ENCODE measurements at regions of chr11 and their contacts with region 1.

Region 1: GRCh38 chr11:59753650-59754493 is 1.3 kb upstream of the STX3 start:
- H3K4me3 Mint-ChIP-seq: peak overlapping the region; percentile 86
- H3K27ac Mint-ChIP-seq: peak overlapping the region; percentile 86
- H3K4me1 Mint-ChIP-seq: peaks cover 44% of the 10 kb centered on the region
- H3K27me3 Mint-ChIP-seq: peaks cover 1% of the 10 kb centered on the region

Region 2: GRCh38 chr11:59802639-59803176 is 48.8 kb after region 1 on chr11:
- intact Hi-C with region 1: loop called (anchors 1 kb)
- H3K4me3 Mint-ChIP-seq: no peak overlapping the region
- H3K27ac Mint-ChIP-seq: no peak overlapping the region
- H3K4me1 Mint-ChIP-seq: peaks cover 4% of the 10 kb centered on the region
- H3K27me3 Mint-ChIP-seq: no peaks in the 10 kb centered on the region

Region 3: DNA sequence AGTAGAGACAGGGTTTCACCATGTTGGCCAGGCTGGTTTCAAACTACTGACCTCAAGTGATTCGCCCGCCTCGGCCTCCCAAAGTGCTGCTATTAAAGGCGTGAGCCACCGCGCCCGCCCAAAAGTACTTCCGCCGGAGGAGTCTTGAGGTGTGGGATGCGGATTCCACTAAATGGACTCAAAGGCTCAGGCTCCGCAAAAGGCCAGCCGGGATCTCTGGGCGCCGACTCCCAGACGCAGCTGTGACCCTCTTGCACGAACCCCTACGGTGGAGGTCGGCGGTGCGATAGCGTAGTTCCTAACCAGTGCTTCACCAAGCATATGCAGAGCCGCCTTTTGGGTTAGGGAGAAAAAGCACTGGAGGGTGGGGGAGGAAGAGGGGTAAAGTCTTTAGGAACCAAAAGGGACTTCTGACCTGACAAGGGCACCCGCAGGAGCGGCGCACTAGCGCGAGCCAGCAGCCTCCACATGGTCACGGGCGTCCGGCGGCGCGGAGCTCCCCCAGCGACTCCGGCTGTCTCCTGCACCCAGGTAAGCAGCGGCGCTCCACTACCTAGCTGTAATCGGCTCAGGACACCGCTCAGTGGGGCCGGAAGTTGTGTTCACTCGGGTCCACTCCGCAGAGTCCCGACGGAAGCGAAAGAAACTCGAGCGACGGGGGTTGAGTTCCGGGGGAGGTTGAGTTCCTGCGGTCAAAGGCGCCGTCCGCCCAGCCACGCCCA is 56.5 kb after region 1 on chr11 and contains the start of gene MRPL16:
- intact Hi-C with region 1: loop called (anchors 2 kb)
- H3K4me3 Mint-ChIP-seq: peak within 1 kb of the TSS; percentile 84
- H3K27ac Mint-ChIP-seq: peak within 1 kb of the TSS; percentile 93
- H3K4me1 Mint-ChIP-seq: peaks cover 32% of the 10 kb centered on the region
- H3K27me3 Mint-ChIP-seq: no peaks in the 10 kb centered on the region

Region 4: DNA sequence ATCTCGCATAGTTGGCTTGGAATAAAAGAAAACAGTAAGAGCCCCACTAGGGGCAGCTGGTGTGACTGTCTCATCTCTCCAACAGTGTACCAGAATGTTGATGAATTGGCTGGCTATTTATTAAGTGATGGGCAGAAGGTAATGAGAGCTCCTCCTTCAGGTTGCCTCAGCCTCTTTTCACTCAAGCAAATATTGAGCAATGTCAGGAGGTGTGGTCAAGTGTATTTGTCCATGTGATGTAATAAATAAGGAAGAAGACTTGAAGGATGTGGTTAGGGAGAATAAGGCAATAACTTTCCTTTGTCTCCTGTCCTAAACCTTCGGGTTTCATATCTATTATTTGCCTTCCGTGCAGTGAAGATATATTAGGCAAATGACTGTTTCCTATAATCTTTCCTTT is 112.5 kb after region 1 on chr11 and contains the start of gene TCN1:
- intact Hi-C with region 1: no loop called
- H3K4me3 Mint-ChIP-seq: peak within 1 kb of the TSS; percentile 37
- H3K27ac Mint-ChIP-seq: no peak within 1 kb of the TSS
- H3K4me1 Mint-ChIP-seq: peaks cover 22% of the 10 kb centered on the region
- H3K27me3 Mint-ChIP-seq: no peaks in the 10 kb centered on the region

Measured in dendritic cell treated with granulocyte-macrophage colony-stimulating factor and Interleukin-4, amounts not matched to agents 40 ng/mL and 50 ng/mL, for 4 days (primary cell).